HEK293T (cell line): ENCODE measurements at regions of chr1 and their contacts with region 1.

Region 1: DNA sequence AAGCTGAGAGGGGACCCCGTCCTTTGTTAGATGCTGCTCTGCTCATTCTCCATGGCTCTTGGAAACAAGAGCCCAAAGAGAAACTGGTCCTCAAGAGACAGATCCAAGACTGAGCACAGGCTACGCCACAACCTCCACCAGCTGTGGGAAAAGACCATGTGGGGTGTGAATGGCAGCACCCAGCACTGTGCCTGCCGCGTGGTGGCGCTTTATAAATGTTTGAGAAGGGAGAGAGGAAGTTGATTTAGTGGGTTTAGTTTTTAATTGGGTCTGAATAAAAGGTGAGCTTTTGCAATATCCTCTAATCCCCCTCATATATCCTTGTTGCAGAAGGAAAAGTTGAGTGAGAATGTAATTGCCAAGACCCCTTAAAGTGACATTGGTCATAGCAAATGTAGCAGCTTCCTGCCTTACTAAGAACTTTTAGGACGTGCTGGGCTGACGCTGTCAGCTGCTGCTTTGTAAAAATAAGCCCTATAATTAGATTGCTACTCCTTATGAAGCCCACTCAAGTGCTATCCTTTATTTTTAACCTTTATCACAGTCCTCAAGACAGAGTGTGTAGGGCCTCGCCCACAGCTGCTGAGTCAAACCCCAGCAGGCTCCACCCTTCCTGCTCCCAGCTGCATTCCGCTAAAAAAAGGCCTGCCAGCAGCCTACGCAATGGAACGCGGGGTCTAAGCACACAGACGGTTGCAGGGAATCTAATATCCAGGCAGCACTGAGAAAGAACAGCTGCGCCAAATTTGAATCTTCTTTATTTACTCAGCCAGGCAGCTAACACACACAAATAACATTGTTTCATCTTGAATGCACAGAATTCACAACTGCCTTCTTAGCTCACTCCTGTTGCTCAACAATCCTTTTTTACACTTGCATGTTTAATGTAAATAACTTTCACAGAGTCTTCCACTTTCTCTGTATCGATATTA is 47.4 kb upstream of the PRDX6 start:
- DNase-seq: no peak

Region 2: DNA sequence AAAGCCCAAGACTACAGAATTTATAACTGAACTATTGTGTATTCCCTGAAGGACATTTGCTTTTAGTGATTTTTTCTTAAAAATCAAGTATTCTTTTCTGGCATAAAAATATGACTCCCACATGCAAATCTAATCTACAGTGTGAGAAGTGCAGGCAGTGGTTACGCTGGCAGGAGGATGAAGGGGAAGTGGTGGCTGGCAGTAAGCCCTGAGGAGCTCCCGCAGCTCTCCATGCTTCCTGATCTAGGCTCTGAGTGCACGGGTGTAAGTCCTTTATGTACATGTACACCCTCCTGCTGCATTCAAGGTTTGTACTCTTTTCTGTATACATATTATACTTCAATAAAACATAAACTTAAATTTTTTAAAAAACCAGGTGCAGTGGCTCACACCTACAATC is 20.1 kb before region 1 on chr1:
- CTCF ChIA-PET with region 1: no interaction called
- POLR2A ChIA-PET with region 1: no interaction called
- DNase-seq: no peak

Region 3: DNA sequence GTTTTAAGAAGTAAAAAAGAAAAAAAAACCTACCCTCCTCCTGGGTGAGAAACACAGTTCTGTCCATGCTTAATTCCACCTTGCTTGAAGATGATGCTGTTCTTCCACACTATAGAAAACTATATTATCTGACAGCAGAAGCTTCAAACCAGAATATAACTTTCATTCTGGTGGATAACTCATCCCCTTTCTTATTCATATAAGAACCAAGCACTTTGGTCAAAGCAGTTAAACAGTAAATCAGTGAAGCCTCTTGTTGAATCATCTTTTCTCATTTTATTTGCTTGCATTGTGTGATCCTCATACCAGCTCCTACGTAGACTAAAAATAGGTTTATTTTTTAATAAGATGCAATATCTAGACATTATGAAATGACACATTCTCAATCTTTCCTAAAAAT is 10.7 kb after region 1 on chr1:
- CTCF ChIA-PET with region 1: no interaction called
- POLR2A ChIA-PET with region 1: no interaction called
- DNase-seq: no peak

Region 4: GRCh38 chr1:173824331-173825081 is 394.8 kb after region 1 on chr1 and contains the starts of genes CENPL and DARS2:
- CTCF ChIA-PET with region 1: no interaction called
- POLR2A ChIA-PET with region 1: interaction called, 11 read pairs
- DNase-seq: peak; percentile 90